ENCODE measurements at regions of chr14 and their contacts with region 1.

Region 1: DNA sequence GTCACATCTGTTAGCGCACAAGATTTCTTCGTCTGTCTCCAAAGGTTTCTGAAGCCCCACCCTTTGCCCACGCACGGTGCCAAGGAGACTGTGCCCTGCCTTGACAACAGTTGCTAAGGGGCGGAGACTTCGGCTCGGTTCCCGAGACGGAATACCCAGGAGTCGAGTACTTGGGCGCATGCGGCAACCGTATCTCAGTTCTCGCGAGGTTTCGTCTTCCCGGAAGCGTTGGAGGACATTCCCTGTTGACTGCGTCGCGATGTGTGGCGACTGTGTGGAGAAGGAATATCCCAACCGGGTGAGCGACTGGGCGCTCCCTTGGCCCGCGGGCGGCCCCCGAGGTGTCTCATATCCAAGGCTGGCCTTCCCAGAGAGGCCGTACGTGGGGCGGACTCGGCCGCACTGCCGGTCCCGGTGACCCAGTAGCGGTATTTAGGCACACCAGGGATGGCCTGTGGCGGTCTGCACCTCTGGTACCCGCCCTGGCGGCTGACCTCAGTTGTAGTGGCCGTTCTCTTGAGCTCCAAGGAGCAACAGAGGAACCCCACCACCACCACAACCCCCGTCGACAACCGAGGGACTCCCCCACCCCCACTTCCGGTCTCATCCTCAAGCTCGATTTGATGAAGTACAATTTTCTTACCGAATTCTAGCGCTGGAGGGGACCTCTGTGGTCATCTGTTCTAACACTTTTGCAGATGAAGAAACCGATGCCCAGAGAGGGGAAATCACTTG is at the start of gene CHURC1:
- DNase-seq: peak; percentile 83 to 99 (median 94)
- ATAC-seq: peak; percentile 98
- H3K4me3 ChIP-seq: peak within 1 kb of the TSS; percentile 96
- H3K4me3 Mint-ChIP-seq: peak within 1 kb of the TSS; percentile 87 to 97 (median 92)
- H3K27ac ChIP-seq: peak within 1 kb of the TSS; percentile 99
- H3K27ac Mint-ChIP-seq: peak within 1 kb of the TSS; percentile 93 to 99 (median 97)
- H3K4me1 ChIP-seq: peaks cover 33 to 37% of the 10 kb centered on the region in 2 donors
- H3K4me1 Mint-ChIP-seq: peaks cover 42 to 60% (median 51%) of the 10 kb centered on the region in 7 donors
- H3K27me3 ChIP-seq: no peaks in the 10 kb centered on the region
- H3K27me3 Mint-ChIP-seq: peaks cover 0 to 13% (median 0%) of the 10 kb centered on the region in 5 donors
- total RNA-seq, gene CHURC1: 71.9 to 117 (median 80.7) TPM

Region 2: DNA sequence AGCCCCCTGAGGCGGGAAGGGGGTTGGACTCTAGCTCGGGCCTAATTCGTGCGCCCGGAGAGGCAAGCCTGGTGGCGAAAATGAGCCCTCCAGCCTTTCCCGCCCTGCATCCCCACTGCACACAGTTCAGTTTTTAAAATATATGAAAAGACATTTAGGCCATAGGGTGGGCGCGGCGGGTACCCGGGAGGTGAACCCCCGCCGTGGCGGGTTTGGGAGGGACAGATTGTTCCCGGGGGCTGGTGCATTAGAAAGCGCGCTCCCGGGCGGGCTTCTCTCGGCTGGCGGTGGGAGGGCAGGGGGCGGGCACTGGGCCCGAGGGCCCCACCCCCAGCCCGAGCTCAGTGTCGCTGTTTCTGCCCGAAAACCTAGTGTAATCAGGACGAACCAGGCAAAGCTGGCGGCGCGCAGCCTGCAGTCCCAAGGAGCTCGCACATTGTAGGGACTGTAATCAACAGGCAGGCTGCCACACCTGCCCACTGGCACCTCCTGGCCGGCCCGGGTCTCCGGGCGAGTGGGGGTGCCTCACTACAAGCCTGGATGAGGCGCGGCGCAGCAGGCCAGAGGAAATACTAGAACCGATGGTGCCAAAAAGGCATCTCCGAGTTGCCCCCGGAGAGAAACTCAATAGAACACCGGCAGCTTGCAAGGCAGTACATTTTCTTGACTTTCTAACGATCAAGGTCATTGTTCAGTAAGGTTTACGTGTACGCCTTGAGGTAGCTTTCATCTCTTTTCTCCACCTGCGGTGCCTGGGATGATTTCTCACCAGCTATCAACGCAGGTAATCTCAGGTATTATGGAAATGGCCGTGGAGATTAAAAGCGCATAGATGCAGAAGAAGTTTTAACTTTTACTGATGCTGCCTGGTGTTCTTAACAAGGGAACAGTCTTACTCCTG is 33.9 kb before region 1 on chr14:
- CTCF ChIA-PET with region 1: no interaction called
- POLR2A ChIA-PET with region 1: interaction called, 8 read pairs
- intact Hi-C with region 1: loop called (anchors 1 kb)
- DNase-seq: peak; percentile 29 to 68 (median 54)
- ATAC-seq: peak; percentile 85
- H3K4me3 ChIP-seq: peak overlapping the region; percentile 67
- H3K4me3 Mint-ChIP-seq: peak overlapping the region; percentile 85 to 92 (median 88)
- H3K27ac ChIP-seq: peak overlapping the region; percentile 20
- H3K27ac Mint-ChIP-seq: peak overlapping the region in 4 of 9 donors; percentile 14 to 59 (median 36)
- H3K4me1 ChIP-seq: peaks cover 0 to 4% of the 10 kb centered on the region in 2 donors
- H3K4me1 Mint-ChIP-seq: peaks cover 0 to 11% (median 8%) of the 10 kb centered on the region in 7 donors
- H3K27me3 ChIP-seq: peaks cover 0 to 7% of the 10 kb centered on the region in 2 donors
- H3K27me3 Mint-ChIP-seq: peaks cover 13 to 81% (median 19%) of the 10 kb centered on the region in 5 donors

Region 3: DNA sequence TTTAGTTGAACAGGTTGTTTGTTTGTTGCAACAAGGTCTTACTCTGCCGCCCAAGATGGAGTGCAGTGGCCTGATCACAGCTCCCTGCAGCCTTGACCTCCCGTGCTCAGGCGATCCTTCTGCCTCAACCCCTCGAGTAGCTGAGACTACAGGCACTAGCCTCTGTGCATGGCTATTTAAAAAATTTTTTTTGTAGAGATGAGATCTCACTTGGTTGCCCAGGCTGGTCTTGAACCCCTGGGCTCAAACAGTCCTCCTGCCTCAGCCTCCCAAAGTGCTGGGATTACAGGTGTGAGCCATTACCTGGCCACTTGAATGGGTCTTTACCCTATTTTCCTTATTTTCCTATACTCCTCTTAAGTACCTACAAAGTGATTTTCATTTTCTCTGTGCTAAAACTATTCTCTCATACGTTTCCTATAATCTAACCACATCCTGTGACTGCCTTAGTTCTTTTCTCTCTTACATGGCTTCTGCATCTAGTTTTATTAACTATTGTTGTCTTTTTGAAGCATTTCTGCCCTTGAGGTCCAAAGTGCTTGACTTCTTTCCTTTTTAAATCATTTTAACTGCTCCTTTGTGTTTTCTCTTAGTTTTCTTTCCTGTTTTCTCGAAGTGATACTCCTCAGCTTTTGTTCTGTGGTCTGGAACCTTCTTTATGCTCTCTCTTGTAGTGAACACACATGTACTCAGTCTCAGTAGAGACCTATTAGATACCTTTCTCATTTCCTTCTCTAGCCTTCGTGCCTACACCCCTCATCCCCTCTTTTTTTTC is 14.0 kb after region 1 on chr14:
- CTCF ChIA-PET with region 1: interaction called, 5 read pairs
- POLR2A ChIA-PET with region 1: interaction called, 86 read pairs
- intact Hi-C with region 1: loop called (anchors 1 kb)
- DNase-seq: peak in 7 of 9 donors; percentile 28 to 81 (median 76)
- ATAC-seq: peak; percentile 84
- H3K4me3 ChIP-seq: peak overlapping the region; percentile 16
- H3K4me3 Mint-ChIP-seq: no peak overlapping the region
- H3K27ac ChIP-seq: peak overlapping the region; percentile 67
- H3K27ac Mint-ChIP-seq: no peak overlapping the region
- H3K4me1 ChIP-seq: peaks cover 40 to 68% of the 10 kb centered on the region in 2 donors
- H3K4me1 Mint-ChIP-seq: peaks cover 17 to 36% (median 29%) of the 10 kb centered on the region in 7 donors
- H3K27me3 ChIP-seq: no peaks in the 10 kb centered on the region
- H3K27me3 Mint-ChIP-seq: no peaks in the 10 kb centered on the region

Region 4: DNA sequence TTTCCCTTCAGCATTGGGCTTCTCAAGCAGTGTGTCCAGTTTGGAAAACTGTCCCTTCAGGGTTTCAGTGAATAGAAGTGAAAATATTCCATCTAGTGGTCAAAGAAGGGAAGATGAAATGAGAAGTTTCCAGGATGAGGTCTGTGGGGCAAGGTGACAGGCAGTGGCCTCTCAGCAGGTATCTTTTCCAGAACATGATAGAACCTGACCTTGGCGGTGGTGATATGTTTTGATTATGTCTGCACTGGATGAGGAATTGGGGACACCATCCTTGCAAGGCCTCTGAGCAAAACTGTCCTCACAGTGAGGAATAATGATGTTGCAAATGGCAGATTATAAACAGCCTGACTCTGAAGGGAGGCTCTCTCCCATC is 23.4 kb after region 1 on chr14:
- CTCF ChIA-PET with region 1: interaction called, 3 read pairs
- POLR2A ChIA-PET with region 1: interaction called, 16 read pairs
- intact Hi-C with region 1: loop called in 1 of 2 experiments (anchors 5 kb)
- DNase-seq: no peak
- ATAC-seq: no peak
- H3K4me3 ChIP-seq: no peak overlapping the region
- H3K4me3 Mint-ChIP-seq: peak overlapping the region in 1 of 10 donors; percentile 34
- H3K27ac ChIP-seq: no peak overlapping the region
- H3K27ac Mint-ChIP-seq: peak overlapping the region in 7 of 9 donors; percentile 25 to 84 (median 69)
- H3K4me1 ChIP-seq: no peaks in the 10 kb centered on the region
- H3K4me1 Mint-ChIP-seq: peaks cover 37 to 92% (median 83%) of the 10 kb centered on the region in 7 donors
- H3K27me3 ChIP-seq: no peaks in the 10 kb centered on the region
- H3K27me3 Mint-ChIP-seq: no peaks in the 10 kb centered on the region

Region 5: GRCh38 chr14:64971943-64972791 is 57.8 kb after region 1 on chr14 and contains the start of gene RAB15:
- CTCF ChIA-PET with region 1: no interaction called
- POLR2A ChIA-PET with region 1: no interaction called
- intact Hi-C with region 1: loop called in 1 of 2 experiments (anchors 2 kb)
- DNase-seq: peak; percentile 23 to 66 (median 44)
- ATAC-seq: peak; percentile 73
- H3K4me3 ChIP-seq: peak within 1 kb of the TSS; percentile 68
- H3K4me3 Mint-ChIP-seq: peak within 1 kb of the TSS; percentile 76 to 92 (median 84)
- H3K27ac ChIP-seq: peak within 1 kb of the TSS; percentile 60
- H3K27ac Mint-ChIP-seq: peak within 1 kb of the TSS; percentile 42 to 82 (median 70)
- H3K4me1 ChIP-seq: peaks cover 0 to 10% of the 10 kb centered on the region in 2 donors
- H3K4me1 Mint-ChIP-seq: peaks cover 10 to 32% (median 24%) of the 10 kb centered on the region in 7 donors
- H3K27me3 ChIP-seq: no peaks in the 10 kb centered on the region
- H3K27me3 Mint-ChIP-seq: peaks cover 0 to 20% (median 0%) of the 10 kb centered on the region in 5 donors
- total RNA-seq, gene RAB15: 4.9 to 7.1 (median 5.9) TPM

Region 6: DNA sequence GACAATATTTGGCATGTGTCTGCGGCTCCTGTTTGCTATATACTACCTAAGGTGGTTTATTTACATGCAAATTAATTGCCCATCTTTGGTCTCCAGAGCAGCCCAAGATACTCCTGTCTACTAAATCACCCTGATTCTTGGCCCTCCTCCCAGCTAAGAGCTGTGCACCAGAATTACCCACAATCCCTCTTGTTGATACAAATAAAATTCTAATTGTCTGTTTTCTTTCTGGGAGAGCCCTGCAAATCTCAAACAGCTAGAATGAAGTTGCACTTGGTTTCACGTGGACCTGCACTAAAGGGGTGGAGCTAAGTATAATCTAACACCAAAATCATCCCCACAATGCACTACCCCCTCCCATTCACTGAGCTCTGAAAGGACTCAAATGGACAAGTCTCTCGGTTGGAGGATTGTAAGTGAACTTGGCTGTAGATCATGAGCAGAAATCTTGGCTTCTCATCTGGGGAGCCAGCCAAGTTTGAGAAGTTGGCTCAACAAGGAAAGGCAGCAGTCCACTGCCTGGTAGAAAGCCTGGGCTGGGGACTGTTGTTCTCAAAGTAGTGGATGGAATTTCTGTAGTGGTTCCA is 181.3 kb after region 1 on chr14:
- CTCF ChIA-PET with region 1: no interaction called
- POLR2A ChIA-PET with region 1: no interaction called
- intact Hi-C with region 1: loop called in 1 of 2 experiments (anchors 1 kb)
- DNase-seq: no peak
- ATAC-seq: no peak
- H3K4me3 ChIP-seq: peak overlapping the region; percentile 1
- H3K4me3 Mint-ChIP-seq: peak overlapping the region; percentile 52 to 91 (median 68)
- H3K27ac ChIP-seq: no peak overlapping the region
- H3K27ac Mint-ChIP-seq: peak overlapping the region; percentile 28 to 99 (median 67)
- H3K4me1 ChIP-seq: peaks cover 34 to 61% of the 10 kb centered on the region in 2 donors
- H3K4me1 Mint-ChIP-seq: peaks cover 56 to 96% (median 90%) of the 10 kb centered on the region in 7 donors
- H3K27me3 ChIP-seq: no peaks in the 10 kb centered on the region
- H3K27me3 Mint-ChIP-seq: no peaks in the 10 kb centered on the region

Measured in naive thymus-derived CD4-positive, alpha-beta T cell (primary cell).